ENCODE measurements at regions of chr15 and their contacts with region 1.

Region 1: DNA sequence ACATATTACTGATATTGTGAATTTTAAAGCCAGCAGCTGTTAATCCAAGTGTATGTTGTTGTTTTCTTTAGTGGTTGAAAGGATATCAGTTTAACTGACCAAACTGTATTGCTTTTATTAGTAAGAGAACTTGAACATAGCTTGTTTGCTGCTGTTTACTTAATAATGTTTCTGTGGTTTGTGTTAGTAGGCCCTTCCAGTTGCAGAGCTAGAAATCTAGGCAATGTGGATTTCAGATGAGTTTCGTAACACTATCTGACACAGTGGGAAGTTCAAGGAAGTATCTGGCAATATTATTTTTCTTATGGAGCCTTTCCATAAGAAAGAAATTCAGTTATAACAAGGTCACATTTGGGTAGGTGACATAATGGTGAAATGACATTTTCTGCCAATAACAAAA is 18.5 kb downstream of the ZNF609 start:
- DNase-seq: no peak
- ATAC-seq: no peak
- H3K4me3 ChIP-seq: no peak overlapping the region
- H3K27ac ChIP-seq: no peak overlapping the region
- H3K4me1 ChIP-seq: peaks cover 0 to 17% (median 0%) of the 10 kb centered on the region in 9 donors
- H3K27me3 ChIP-seq: no peaks in the 10 kb centered on the region
- CTCF ChIP-seq: no peak

Region 2: GRCh38 chr15:63264688-63265302 is 1214.1 kb before region 1 on chr15:
- intact Hi-C with region 1: loop called in 1 of 10 experiments (anchors 5 kb)
- DNase-seq: no peak
- ATAC-seq: no peak
- H3K4me3 ChIP-seq: no peak overlapping the region
- H3K27ac ChIP-seq: no peak overlapping the region
- H3K4me1 ChIP-seq: peaks cover 0 to 4% (median 0%) of the 10 kb centered on the region in 9 donors
- H3K27me3 ChIP-seq: no peaks in the 10 kb centered on the region
- CTCF ChIP-seq: no peak